CD14-positive monocyte (primary cell): ENCODE measurements at regions of chr1 and their contacts with region 1.

Region 1: GRCh38 chr1:116570358-116571200 is at the start of gene CD58:
- DNase-seq: peak; percentile 89 to 95 (median 90)
- H3K4me3 ChIP-seq: peak within 1 kb of the TSS; percentile 73 to 84 (median 83)
- H3K4me3 Mint-ChIP-seq: peak within 1 kb of the TSS; percentile 98 to 100
- H3K27ac ChIP-seq: peak within 1 kb of the TSS; percentile 97
- H3K27ac Mint-ChIP-seq: peak within 1 kb of the TSS; percentile 94 to 98 (median 96)
- H3K4me1 ChIP-seq: peaks cover 32 to 57% of the 10 kb centered on the region in 2 donors
- H3K4me1 Mint-ChIP-seq: peaks cover 60% of the 10 kb centered on the region
- H3K27me3 ChIP-seq: no peaks in the 10 kb centered on the region
- H3K27me3 Mint-ChIP-seq: peaks cover 0 to 7% (median 4%) of the 10 kb centered on the region in 3 donors
- CTCF ChIP-seq: peak; percentile 81
- polyA plus RNA-seq, gene CD58: 81.0 to 168 (median 128) TPM

Region 2: GRCh38 chr1:116504308-116505156 is 66.0 kb before region 1 on chr1:
- intact Hi-C with region 1: loop called in 1 of 2 experiments (anchors 5 kb)
- DNase-seq: peak; percentile 99 to 100 (median 99)
- H3K4me3 ChIP-seq: peak overlapping the region in 1 of 3 experiments; percentile 21
- H3K4me3 Mint-ChIP-seq: no peak overlapping the region
- H3K27ac ChIP-seq: peak overlapping the region; percentile 95 to 100
- H3K27ac Mint-ChIP-seq: peak overlapping the region; percentile 98 to 100 (median 99)
- H3K4me1 ChIP-seq: peaks cover 68 to 72% of the 10 kb centered on the region in 2 donors
- H3K4me1 Mint-ChIP-seq: peaks cover 68% of the 10 kb centered on the region
- H3K27me3 ChIP-seq: no peaks in the 10 kb centered on the region
- H3K27me3 Mint-ChIP-seq: peaks cover 0 to 4% (median 1%) of the 10 kb centered on the region in 3 donors
- CTCF ChIP-seq: no peak

Region 3: GRCh38 chr1:116538544-116538943 is 32.0 kb before region 1 on chr1:
- intact Hi-C with region 1: loop called in 1 of 2 experiments (anchors 5 kb)
- DNase-seq: peak; percentile 48 to 86 (median 55)
- H3K4me3 ChIP-seq: no peak overlapping the region
- H3K4me3 Mint-ChIP-seq: no peak overlapping the region
- H3K27ac ChIP-seq: peak overlapping the region in 1 of 2 donors; percentile 94
- H3K27ac Mint-ChIP-seq: peak overlapping the region; percentile 83 to 97 (median 95)
- H3K4me1 ChIP-seq: peaks cover 52 to 57% of the 10 kb centered on the region in 2 donors
- H3K4me1 Mint-ChIP-seq: peaks cover 58% of the 10 kb centered on the region
- H3K27me3 ChIP-seq: no peaks in the 10 kb centered on the region
- H3K27me3 Mint-ChIP-seq: peaks cover 0 to 3% (median 2%) of the 10 kb centered on the region in 3 donors
- CTCF ChIP-seq: no peak

Region 4: DNA sequence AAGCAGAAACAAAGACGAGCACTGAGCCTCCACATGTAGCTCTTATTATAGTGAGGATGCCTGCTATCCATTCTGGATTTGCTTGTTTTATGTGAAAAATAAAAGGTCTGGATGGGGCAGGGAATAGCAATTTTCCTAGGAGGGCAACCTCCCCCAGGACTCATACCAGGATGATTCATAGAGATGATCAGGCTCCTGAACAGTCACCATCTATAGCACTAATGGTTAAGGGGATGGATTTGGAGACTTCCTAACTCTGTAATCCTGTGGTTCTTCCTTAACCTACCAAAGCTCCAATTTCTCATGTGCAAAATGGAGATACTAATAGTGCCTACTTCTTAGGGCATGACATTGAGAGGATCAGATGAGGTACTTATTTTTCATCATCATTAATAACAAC is 34.7 kb after region 1 on chr1:
- intact Hi-C with region 1: no loop called
- DNase-seq: peak in 2 of 3 donors; percentile 25 to 52
- H3K4me3 ChIP-seq: peak overlapping the region in 1 of 3 experiments; percentile 19
- H3K4me3 Mint-ChIP-seq: peak overlapping the region in 1 of 2 donors; percentile 65
- H3K27ac ChIP-seq: peak overlapping the region in 1 of 2 donors; percentile 80
- H3K27ac Mint-ChIP-seq: peak overlapping the region; percentile 90 to 98 (median 96)
- H3K4me1 ChIP-seq: peaks cover 50 to 66% of the 10 kb centered on the region in 2 donors
- H3K4me1 Mint-ChIP-seq: peaks cover 76% of the 10 kb centered on the region
- H3K27me3 ChIP-seq: no peaks in the 10 kb centered on the region
- H3K27me3 Mint-ChIP-seq: no peaks in the 10 kb centered on the region
- CTCF ChIP-seq: no peak

Region 5: GRCh38 chr1:116674011-116674531 is 103.5 kb after region 1 on chr1:
- intact Hi-C with region 1: loop called (anchors 5 to 10 kb)
- DNase-seq: no peak
- H3K4me3 ChIP-seq: no peak overlapping the region
- H3K4me3 Mint-ChIP-seq: peak overlapping the region in 1 of 2 donors; percentile 9
- H3K27ac ChIP-seq: no peak overlapping the region
- H3K27ac Mint-ChIP-seq: no peak overlapping the region
- H3K4me1 ChIP-seq: peaks cover 0 to 4% of the 10 kb centered on the region in 2 donors
- H3K4me1 Mint-ChIP-seq: peaks cover 10% of the 10 kb centered on the region
- H3K27me3 ChIP-seq: peaks cover 0 to 6% of the 10 kb centered on the region in 2 donors
- H3K27me3 Mint-ChIP-seq: peaks cover 13 to 25% (median 21%) of the 10 kb centered on the region in 3 donors
- CTCF ChIP-seq: no peak

Region 6: DNA sequence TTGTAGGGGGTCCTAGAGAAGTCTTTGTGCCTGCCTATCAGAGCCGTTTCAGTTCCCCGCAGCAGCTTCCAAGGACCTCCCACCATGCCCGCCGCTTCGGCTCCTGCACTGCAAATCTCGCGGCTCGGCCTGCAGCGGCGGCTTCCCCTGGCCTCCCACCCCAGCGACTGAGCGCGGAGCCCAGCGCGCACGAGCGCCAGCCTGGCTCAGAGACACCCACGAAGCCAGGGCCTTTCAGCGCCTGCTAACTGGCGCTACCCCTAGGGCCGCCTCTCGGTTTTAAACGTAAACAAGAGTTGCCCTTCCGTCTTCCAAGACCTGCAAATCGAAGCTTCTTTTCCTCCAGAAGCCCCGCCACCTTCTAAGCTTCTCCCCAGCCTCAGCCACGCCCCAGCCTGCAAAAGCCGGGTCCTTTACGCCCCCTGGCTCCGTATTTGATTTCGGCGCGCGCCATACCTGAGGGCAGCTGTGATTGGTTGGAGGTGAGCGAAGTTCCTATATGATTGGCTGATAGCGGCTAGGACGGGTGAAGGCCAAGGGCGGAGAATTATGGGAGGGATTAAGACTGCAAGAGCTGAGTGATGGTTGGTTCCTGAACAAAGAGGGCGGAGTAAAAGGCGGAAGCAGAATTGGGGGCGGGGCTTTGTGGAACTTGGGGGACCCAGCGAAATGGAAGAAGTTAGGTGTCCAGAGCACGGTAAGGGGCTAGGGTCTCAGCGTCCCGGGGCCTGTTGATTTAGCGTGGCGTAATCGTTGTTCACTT is 489.3 kb after region 1 on chr1 and contains the start of gene TTF2:
- intact Hi-C with region 1: loop called (anchors 10 kb)
- DNase-seq: peak; percentile 95 to 98 (median 96)
- H3K4me3 ChIP-seq: peak within 1 kb of the TSS; percentile 67 to 85 (median 73)
- H3K4me3 Mint-ChIP-seq: no peak within 1 kb of the TSS
- H3K27ac ChIP-seq: peak within 1 kb of the TSS; percentile 22 to 85
- H3K27ac Mint-ChIP-seq: peak within 1 kb of the TSS in 3 of 7 donors; percentile 63 to 77 (median 75)
- H3K4me1 ChIP-seq: peaks cover 16 to 25% of the 10 kb centered on the region in 2 donors
- H3K4me1 Mint-ChIP-seq: peaks cover 22% of the 10 kb centered on the region
- H3K27me3 ChIP-seq: no peaks in the 10 kb centered on the region
- H3K27me3 Mint-ChIP-seq: no peaks in the 10 kb centered on the region
- CTCF ChIP-seq: no peak
- polyA plus RNA-seq, gene TTF2: 5.6 to 12.9 (median 8.0) TPM